Endothelial cell of umbilical vein (primary cell): ENCODE measurements at regions of chr16 and their contacts with region 1.

Region 1: DNA sequence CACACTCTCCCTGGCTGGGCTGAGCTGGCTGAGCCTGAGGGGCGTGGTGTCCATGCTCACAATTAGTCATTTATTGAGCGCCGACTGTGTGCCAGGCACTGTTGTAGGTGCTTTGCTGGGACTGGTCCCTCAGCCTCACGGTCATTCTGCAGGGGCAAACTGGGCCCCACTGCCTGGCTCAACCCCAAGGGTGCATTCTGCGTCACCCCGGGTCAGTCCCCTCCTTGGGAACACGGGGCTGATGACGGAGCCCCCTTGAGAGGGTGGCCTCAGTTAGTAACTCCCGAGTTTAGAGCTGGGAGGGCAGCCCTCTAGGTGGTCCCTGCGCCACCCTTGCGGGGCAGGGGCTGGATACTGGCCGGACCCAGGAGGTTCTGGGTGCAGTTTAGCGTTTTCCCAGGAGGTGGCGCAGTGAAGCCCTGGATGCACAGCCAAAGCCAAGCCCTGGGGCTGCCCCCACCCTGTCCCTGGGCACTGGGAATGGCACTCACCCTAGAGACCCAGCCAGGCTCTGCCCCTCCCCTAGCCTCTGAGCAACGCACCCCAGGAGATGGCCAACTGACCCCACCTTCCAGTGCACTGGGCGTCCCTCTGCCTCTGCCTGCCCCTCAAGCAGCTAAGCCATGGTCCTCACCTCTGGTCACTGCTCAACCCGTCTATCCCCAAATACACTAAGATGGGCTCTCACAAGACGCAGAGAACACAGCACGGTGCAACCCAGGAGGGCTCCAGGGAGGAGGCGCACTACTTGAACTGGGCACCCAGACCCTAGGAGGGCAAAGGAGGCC is 243.2 kb upstream of the GSE1 start:
- DNase-seq: no peak
- H3K4me3 ChIP-seq: no peak overlapping the region
- H3K27ac ChIP-seq: no peak overlapping the region
- H3K4me1 ChIP-seq: no peaks in the 10 kb centered on the region
- H3K27me3 ChIP-seq: no peaks in the 10 kb centered on the region
- CTCF ChIP-seq: peak; percentile 75 to 87
- POLR2A ChIP-seq: no peak

Region 2: DNA sequence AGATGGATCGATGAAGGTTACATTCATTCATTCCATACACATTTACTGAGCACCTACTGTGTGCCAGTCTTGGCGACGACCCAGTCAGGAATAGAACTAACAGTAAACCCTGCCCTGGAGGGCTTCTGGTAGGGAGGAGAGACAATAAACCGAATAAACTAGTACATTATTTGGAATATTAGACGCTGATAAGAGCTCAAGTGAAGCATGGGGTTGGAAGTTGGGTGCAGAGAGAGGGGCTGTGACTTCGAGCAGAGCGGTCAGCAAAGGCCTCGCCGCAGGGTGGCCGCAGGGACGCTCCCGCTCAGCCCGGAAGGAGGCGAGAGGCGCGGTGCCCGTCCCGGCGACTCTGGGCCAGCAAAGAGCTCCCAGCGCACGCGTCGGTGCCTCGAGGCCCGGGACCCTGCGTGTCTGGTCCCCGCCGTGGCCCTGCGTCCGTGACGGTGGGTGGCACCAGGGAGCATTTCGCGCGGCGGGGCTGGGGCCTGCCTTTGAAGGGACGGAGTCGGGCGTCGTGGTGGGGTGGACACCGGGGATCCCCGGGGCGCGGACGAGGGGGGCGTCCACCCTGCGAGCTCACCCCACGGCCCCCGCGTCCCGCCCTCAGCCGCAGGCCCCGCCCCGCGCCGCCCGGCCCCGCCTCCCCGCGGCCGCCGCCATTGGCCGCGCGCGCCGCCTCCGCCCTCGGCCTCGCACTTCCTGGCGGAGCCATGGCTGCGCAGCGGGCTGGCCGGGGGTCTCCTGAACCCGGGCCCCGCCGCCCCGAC is 721.9 kb before region 1 on chr16 and contains the start of gene KLHL36:
- CTCF ChIA-PET with region 1: no interaction called
- POLR2A ChIA-PET with region 1: no interaction called
- dilution Hi-C with region 1: no loop called
- intact Hi-C with region 1: no loop called
- DNase-seq: peak; percentile 33
- H3K4me3 ChIP-seq: peak within 1 kb of the TSS; percentile 32 to 65 (median 40)
- H3K27ac ChIP-seq: no peak within 1 kb of the TSS
- H3K4me1 ChIP-seq: peaks cover 9% of the 10 kb centered on the region
- H3K27me3 ChIP-seq: peaks cover 3% of the 10 kb centered on the region in 2 experiments
- CTCF ChIP-seq: no peak
- POLR2A ChIP-seq: peak; percentile 43
- total RNA-seq, gene KLHL36: 33.3 and 38.8 TPM in 2 replicates

Region 3: DNA sequence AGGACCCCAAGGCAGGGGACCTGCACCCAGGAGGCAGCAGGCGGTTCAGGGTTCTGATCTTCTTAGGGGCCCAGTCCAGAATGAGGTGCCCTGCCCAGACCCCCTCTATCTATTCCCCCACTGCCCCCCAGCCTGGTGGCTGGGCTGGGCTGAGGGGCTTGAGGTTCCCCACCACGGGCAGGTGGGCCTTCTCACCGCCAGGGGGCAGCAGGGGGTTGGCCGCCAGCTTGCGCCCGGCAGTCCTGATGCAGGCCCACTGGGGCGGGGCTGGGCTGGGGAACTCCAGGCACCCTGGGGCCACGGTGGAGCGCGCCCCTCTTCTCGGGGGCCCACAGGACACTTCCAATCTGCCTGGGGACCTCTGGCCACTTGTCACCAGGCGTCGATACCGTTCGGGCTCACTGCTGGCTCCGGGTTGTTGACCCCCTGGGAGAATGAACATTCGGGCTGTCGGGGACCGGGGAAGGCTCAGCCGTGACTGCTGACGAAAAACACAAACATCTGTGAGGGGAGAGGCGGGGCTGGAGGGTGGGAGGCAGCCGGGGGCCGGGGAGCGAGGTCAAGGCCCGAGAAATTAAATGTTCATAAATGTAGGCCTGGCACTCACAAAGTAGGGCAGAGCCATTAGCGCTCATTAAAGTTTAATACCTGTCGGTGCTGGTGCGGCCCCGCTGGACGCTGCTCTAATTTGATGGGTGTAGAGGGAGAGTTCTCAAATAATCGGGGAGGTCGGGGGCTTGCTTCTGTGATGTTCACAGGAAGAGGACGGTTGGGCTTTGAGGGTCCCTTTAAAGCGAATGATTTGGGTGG is 23.9 kb after region 1 on chr16:
- CTCF ChIA-PET with region 1: interaction called, 22 read pairs
- POLR2A ChIA-PET with region 1: no interaction called
- dilution Hi-C with region 1: no loop called
- intact Hi-C with region 1: no loop called
- DNase-seq: no peak
- H3K4me3 ChIP-seq: no peak overlapping the region
- H3K27ac ChIP-seq: no peak overlapping the region
- H3K4me1 ChIP-seq: peaks cover 12% of the 10 kb centered on the region
- H3K27me3 ChIP-seq: no peaks in the 10 kb centered on the region
- CTCF ChIP-seq: peak; percentile 74 to 92
- POLR2A ChIP-seq: no peak